Naive thymus-derived CD4-positive, alpha-beta T cell (primary cell): ENCODE measurements at regions of chr3 and their contacts with region 1.

Region 1: DNA sequence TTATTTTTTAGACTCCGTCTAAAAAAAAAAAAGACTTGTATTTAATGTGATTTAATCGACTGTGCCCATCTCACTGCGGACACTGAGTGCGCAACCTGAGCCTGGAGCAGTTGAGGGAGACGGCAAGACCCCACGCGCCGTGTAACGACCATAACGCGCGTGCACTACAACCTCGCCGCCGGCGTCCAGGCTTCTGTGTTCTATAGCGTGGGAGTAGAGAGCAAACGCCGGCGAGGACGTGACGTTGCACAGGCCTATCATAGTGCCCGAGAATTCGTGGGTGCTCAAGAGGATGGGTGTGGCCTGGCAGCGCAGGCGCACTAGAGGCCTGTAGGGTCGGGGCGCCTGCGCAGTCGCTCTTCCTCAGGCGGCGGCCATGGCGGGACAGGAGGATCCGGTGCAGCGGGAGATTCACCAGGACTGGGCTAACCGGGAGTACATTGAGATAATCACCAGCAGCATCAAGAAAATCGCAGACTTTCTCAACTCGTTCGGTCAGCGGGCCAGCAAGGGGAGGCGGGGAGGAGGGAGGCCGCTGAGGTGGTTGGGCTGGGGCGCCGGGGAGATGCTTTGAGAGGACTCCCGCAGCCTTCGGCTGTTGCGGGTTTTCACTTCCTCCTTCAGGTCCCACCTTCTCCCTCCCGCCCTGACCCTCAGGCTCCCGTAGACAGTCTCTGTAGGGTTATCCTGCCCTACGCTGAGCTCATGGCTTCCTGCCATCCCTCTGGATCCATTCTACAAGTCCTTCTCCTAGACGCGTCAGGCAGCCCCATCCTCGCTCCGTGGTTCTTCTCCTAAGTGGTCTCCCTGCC is at the start of gene BRK1:
- DNase-seq: peak; percentile 73 to 94 (median 91)
- ATAC-seq: peak; percentile 99
- H3K4me3 ChIP-seq: peak within 1 kb of the TSS; percentile 83
- H3K4me3 Mint-ChIP-seq: peak within 1 kb of the TSS; percentile 91 to 100 (median 98)
- H3K27ac ChIP-seq: peak within 1 kb of the TSS; percentile 85
- H3K27ac Mint-ChIP-seq: peak within 1 kb of the TSS; percentile 92 to 99 (median 98)
- H3K4me1 ChIP-seq: peaks cover 11 to 13% of the 10 kb centered on the region in 2 donors
- H3K4me1 Mint-ChIP-seq: peaks cover 23 to 48% (median 40%) of the 10 kb centered on the region in 7 donors
- H3K27me3 ChIP-seq: no peaks in the 10 kb centered on the region
- H3K27me3 Mint-ChIP-seq: peaks cover 0 to 2% (median 0%) of the 10 kb centered on the region in 5 donors
- total RNA-seq, gene BRK1: 40.9 to 117 (median 65.8) TPM

Region 2: GRCh38 chr3:9649791-9650521 is 465.6 kb before region 1 on chr3:
- CTCF ChIA-PET with region 1: no interaction called
- POLR2A ChIA-PET with region 1: interaction called, 6 read pairs
- intact Hi-C with region 1: loop called in 1 of 2 experiments (anchors 1 kb)
- DNase-seq: peak in 2 of 9 donors; percentile 4 to 5
- ATAC-seq: peak; percentile 15
- H3K4me3 ChIP-seq: peak overlapping the region; percentile 97
- H3K4me3 Mint-ChIP-seq: peak overlapping the region; percentile 86 to 98 (median 95)
- H3K27ac ChIP-seq: peak overlapping the region; percentile 85
- H3K27ac Mint-ChIP-seq: peak overlapping the region; percentile 91 to 98 (median 97)
- H3K4me1 ChIP-seq: peaks cover 15 to 19% of the 10 kb centered on the region in 2 donors
- H3K4me1 Mint-ChIP-seq: peaks cover 19 to 51% (median 37%) of the 10 kb centered on the region in 7 donors
- H3K27me3 ChIP-seq: no peaks in the 10 kb centered on the region
- H3K27me3 Mint-ChIP-seq: peaks cover 0 to 3% (median 0%) of the 10 kb centered on the region in 5 donors

Region 3: DNA sequence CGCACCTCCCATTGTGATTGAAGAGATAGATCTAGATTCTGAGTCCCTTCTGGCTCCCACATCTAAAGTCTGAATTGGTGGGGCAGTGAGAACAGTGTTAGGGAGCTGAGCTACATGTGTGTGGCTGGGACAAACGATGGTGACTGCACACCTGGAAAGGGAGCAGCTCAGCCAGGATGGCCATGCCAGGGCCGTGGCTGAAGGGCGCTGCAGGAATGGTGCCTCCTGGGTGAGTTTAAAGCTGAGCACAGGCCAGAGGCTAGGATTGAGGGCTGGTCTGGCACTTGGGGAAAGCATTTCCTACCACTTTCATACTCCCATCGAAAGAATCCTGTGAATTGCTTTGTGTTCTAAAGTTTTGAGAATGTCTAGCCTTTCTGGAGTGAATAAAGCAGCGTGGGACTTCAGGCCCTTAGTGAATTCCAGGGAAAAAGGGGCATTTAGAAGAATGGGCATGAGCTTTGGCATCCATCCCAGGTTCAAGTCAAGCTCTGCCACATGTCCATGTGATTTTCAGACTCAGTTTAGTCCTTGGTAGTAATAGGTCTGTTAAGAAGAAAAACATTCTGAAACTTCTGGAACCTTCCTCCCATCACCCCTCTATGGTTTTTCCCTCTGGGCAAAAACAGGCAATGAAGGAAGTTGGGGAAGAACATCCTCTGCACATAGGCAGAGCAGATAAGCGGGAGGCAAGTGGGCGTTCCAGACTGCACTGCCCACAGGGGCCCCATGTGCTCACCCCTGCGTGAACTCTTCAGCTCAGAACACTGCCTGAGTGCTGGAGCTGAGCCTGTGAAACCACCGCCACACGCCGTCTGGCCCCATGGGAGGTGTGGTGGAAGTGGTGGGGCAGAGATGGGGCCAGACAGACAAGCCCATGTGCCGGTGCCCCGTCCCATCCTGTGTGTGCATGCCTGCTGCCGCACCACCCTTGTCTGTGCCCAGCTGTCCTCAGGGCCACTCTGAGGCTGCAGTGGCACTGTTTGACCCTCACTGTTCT is 424.8 kb before region 1 on chr3:
- CTCF ChIA-PET with region 1: no interaction called
- POLR2A ChIA-PET with region 1: no interaction called
- intact Hi-C with region 1: no loop called
- DNase-seq: no peak
- ATAC-seq: no peak
- H3K4me3 ChIP-seq: no peak overlapping the region
- H3K4me3 Mint-ChIP-seq: no peak overlapping the region
- H3K27ac ChIP-seq: no peak overlapping the region
- H3K27ac Mint-ChIP-seq: peak overlapping the region in 3 of 9 donors; percentile 19 to 70 (median 26)
- H3K4me1 ChIP-seq: no peaks in the 10 kb centered on the region
- H3K4me1 Mint-ChIP-seq: peaks cover 0 to 2% (median 0%) of the 10 kb centered on the region in 7 donors
- H3K27me3 ChIP-seq: no peaks in the 10 kb centered on the region
- H3K27me3 Mint-ChIP-seq: no peaks in the 10 kb centered on the region

Region 4: DNA sequence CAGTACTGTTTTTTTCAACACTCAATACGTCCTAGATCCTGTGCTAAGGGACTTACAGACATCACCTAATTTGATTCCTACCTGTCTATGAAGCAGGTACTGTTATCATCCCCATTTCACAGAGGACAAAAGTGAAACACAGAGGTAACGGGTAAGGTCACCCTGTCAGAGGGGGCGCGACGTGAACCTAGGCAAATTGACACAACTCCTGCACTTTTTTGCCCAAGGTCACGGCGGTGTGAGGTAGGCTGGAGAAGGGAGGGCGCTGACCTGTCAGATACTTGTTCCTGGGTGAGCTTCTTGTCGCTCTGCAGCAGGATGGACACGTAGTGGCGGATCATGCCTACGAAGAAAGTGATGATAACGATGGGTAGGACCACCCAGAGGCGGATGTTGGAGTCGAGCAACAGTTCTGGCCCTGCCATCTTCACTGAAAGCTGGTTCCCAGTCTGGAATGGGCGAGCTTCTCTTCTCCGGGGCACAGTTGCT is 129.3 kb before region 1 on chr3:
- CTCF ChIA-PET with region 1: no interaction called
- POLR2A ChIA-PET with region 1: no interaction called
- intact Hi-C with region 1: loop called (anchors 1 kb)
- DNase-seq: no peak
- ATAC-seq: peak; percentile 52
- H3K4me3 ChIP-seq: peak overlapping the region; percentile 100
- H3K4me3 Mint-ChIP-seq: peak overlapping the region; percentile 95 to 99 (median 98)
- H3K27ac ChIP-seq: peak overlapping the region; percentile 96
- H3K27ac Mint-ChIP-seq: peak overlapping the region; percentile 95 to 100 (median 98)
- H3K4me1 ChIP-seq: peaks cover 13 to 15% of the 10 kb centered on the region in 2 donors
- H3K4me1 Mint-ChIP-seq: peaks cover 0 to 48% (median 35%) of the 10 kb centered on the region in 7 donors
- H3K27me3 ChIP-seq: no peaks in the 10 kb centered on the region
- H3K27me3 Mint-ChIP-seq: no peaks in the 10 kb centered on the region

Region 5: GRCh38 chr3:10085736-10086135 is 29.8 kb before region 1 on chr3:
- CTCF ChIA-PET with region 1: no interaction called
- POLR2A ChIA-PET with region 1: no interaction called
- intact Hi-C with region 1: no loop called
- DNase-seq: no peak
- ATAC-seq: no peak
- H3K4me3 ChIP-seq: no peak overlapping the region
- H3K4me3 Mint-ChIP-seq: no peak overlapping the region
- H3K27ac ChIP-seq: no peak overlapping the region
- H3K27ac Mint-ChIP-seq: no peak overlapping the region
- H3K4me1 ChIP-seq: no peaks in the 10 kb centered on the region
- H3K4me1 Mint-ChIP-seq: no peaks in the 10 kb centered on the region
- H3K27me3 ChIP-seq: no peaks in the 10 kb centered on the region
- H3K27me3 Mint-ChIP-seq: no peaks in the 10 kb centered on the region

Region 6: GRCh38 chr3:10142707-10143566 is 27.4 kb after region 1 on chr3:
- CTCF ChIA-PET with region 1: interaction called, 4 read pairs
- POLR2A ChIA-PET with region 1: interaction called, 6 read pairs
- intact Hi-C with region 1: loop called (anchors 1 kb)
- DNase-seq: peak in 2 of 9 donors; percentile 11 to 12
- ATAC-seq: no peak
- H3K4me3 ChIP-seq: peak overlapping the region; percentile 87
- H3K4me3 Mint-ChIP-seq: peak overlapping the region; percentile 85 to 98 (median 96)
- H3K27ac ChIP-seq: peak overlapping the region; percentile 95
- H3K27ac Mint-ChIP-seq: peak overlapping the region; percentile 38 to 98 (median 94)
- H3K4me1 ChIP-seq: peaks cover 10 to 12% of the 10 kb centered on the region in 2 donors
- H3K4me1 Mint-ChIP-seq: peaks cover 14 to 48% (median 37%) of the 10 kb centered on the region in 7 donors
- H3K27me3 ChIP-seq: no peaks in the 10 kb centered on the region
- H3K27me3 Mint-ChIP-seq: no peaks in the 10 kb centered on the region

Region 7: DNA sequence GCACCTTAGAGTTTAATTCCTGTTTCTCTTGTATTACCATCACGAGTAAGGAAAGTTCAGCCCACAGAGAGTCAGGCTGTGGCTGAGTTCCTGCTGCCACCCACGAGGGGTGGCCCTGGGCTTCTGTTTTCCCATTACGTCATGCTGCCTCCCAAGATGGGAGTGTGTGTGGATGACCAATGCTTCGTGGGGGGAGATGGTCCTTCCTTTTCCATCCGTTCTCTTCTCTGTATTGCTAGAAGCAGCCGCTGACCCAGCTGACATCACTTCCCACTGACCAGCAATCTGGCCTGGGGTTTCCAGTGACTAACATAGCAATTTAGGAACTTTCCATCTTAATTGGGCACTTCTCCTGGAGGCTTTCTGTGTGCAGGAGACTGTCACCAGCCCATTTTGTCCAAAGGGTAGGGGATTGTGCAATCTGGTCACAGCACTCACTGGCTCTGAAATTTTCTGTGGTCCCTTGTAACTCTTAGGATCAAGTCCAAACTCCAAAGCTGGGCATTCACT is 58.4 kb after region 1 on chr3:
- CTCF ChIA-PET with region 1: no interaction called
- POLR2A ChIA-PET with region 1: no interaction called
- intact Hi-C with region 1: no loop called
- DNase-seq: peak in 1 of 9 donors; percentile 33
- ATAC-seq: peak; percentile 91
- H3K4me3 ChIP-seq: no peak overlapping the region
- H3K4me3 Mint-ChIP-seq: peak overlapping the region in 1 of 10 donors; percentile 1
- H3K27ac ChIP-seq: no peak overlapping the region
- H3K27ac Mint-ChIP-seq: peak overlapping the region in 6 of 9 donors; percentile 18 to 66 (median 54)
- H3K4me1 ChIP-seq: no peaks in the 10 kb centered on the region
- H3K4me1 Mint-ChIP-seq: peaks cover 5 to 21% (median 6%) of the 10 kb centered on the region in 7 donors
- H3K27me3 ChIP-seq: no peaks in the 10 kb centered on the region
- H3K27me3 Mint-ChIP-seq: no peaks in the 10 kb centered on the region

Region 8: DNA sequence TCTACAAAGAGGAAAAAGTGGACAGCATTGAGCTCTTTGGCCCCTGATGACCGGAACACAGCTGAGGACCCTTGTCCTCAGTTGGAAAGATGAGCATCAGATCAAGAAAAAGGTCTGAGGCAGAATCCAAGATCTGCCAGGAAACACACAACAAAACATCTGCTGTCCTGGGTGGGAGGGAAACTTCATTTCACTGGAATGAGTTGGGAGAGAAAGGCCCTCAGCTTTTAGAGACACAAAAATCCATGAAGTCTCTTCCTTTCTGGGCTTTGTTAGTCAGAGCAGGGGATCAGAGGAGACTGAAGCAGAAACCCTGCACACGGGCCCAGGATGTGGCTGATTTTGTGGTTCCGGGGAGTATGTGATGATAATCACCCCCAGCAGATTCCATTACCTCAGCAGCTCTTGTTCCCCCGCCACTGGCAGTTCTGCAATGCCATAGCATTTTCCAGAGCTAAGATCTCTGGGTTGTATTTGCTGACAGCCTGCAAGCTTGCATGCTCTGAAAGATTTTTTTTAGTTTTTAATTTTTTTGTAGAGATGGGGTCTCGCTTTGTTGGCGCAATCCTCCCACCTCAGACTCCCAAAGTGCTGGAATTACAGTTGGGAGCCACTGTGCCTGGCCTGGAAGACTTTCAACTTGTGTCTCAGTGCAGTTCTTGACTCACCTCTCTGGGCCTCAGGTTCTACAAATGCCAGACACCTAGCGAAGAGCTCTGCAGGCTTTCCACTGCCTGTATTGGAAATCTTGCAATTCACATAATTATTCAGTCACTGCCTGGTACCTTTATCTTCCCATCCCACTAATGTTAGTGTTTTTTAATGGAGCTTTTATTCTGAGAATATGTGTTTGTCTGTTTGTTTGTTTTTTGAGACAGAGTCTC is 126.9 kb after region 1 on chr3:
- CTCF ChIA-PET with region 1: no interaction called
- POLR2A ChIA-PET with region 1: no interaction called
- intact Hi-C with region 1: loop called in 1 of 2 experiments (anchors 1 kb)
- DNase-seq: peak; percentile 20 to 93 (median 84)
- ATAC-seq: peak; percentile 98
- H3K4me3 ChIP-seq: peak overlapping the region; percentile 13
- H3K4me3 Mint-ChIP-seq: peak overlapping the region; percentile 75 to 82 (median 77)
- H3K27ac ChIP-seq: peak overlapping the region; percentile 71
- H3K27ac Mint-ChIP-seq: peak overlapping the region; percentile 86 to 96 (median 93)
- H3K4me1 ChIP-seq: peaks cover 33 to 43% of the 10 kb centered on the region in 2 donors
- H3K4me1 Mint-ChIP-seq: peaks cover 40 to 60% (median 54%) of the 10 kb centered on the region in 7 donors
- H3K27me3 ChIP-seq: no peaks in the 10 kb centered on the region
- H3K27me3 Mint-ChIP-seq: no peaks in the 10 kb centered on the region

Region 9: DNA sequence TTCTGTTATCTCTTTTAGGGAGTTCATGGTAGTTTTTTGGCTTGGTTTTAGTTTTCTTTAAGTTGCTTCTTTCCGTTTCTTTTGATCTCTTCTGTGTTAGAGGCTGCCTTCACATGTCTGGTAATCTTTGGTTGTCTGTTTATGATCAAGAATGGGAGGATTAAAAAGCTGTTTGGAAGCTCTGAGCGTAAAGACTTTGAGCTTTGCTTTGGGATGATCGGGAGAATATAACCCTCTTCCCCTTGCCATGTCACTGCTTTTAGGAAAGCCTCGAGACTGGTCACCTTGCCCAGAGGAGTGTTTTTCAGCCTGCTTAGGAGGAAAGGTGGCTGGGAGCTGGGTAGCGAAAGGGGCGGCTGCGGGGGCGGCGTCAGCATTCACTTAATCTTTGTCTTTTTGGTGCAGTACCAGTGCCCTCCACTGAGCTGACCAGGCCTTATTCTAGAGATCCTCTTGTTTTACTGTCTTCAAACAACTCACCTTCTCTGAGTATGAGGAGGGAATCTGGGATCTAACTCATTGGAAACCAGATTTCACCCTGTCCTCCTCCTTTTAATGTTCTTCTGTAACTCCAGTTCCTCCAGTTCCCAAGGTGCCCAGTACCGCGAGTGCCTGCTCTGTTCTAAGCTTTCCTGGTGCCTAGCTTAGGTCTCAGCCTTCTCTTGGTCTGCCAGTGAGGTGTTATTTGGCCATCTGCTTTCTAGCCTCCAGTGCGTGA is 148.3 kb after region 1 on chr3:
- CTCF ChIA-PET with region 1: interaction called, 3 read pairs
- POLR2A ChIA-PET with region 1: interaction called, 3 read pairs
- intact Hi-C with region 1: loop called in 1 of 2 experiments (anchors 1 kb)
- DNase-seq: peak; percentile 33 to 76 (median 71)
- ATAC-seq: peak; percentile 96
- H3K4me3 ChIP-seq: peak overlapping the region; percentile 47
- H3K4me3 Mint-ChIP-seq: peak overlapping the region; percentile 68 to 87 (median 77)
- H3K27ac ChIP-seq: peak overlapping the region; percentile 73
- H3K27ac Mint-ChIP-seq: peak overlapping the region; percentile 82 to 97 (median 91)
- H3K4me1 ChIP-seq: peaks cover 36 to 62% of the 10 kb centered on the region in 2 donors
- H3K4me1 Mint-ChIP-seq: peaks cover 50 to 97% (median 80%) of the 10 kb centered on the region in 7 donors
- H3K27me3 ChIP-seq: no peaks in the 10 kb centered on the region
- H3K27me3 Mint-ChIP-seq: no peaks in the 10 kb centered on the region